Panc1 (cell line): ENCODE measurements at regions of chr1 and their contacts with region 1.

Region 1: GRCh38 chr1:9026271-9026670 is at the start of gene SLC2A7:
- DNase-seq: no peak
- ATAC-seq: no peak
- H3K4me3 ChIP-seq: no peak within 1 kb of the TSS
- H3K27ac ChIP-seq: no peak within 1 kb of the TSS
- H3K4me1 ChIP-seq: no peaks in the 10 kb centered on the region
- H3K27me3 ChIP-seq: no peaks in the 10 kb centered on the region
- CTCF ChIP-seq: no peak
- total RNA-seq, gene SLC2A7: not detected

Region 2: GRCh38 chr1:8925406-8925805 is 100.9 kb before region 1 on chr1:
- CTCF ChIA-PET with region 1: interaction called, 11 read pairs
- POLR2A ChIA-PET with region 1: no interaction called
- in situ Hi-C with region 1: no loop called
- intact Hi-C with region 1: no loop called
- DNase-seq: no peak
- ATAC-seq: no peak
- H3K4me3 ChIP-seq: no peak overlapping the region
- H3K27ac ChIP-seq: no peak overlapping the region
- H3K4me1 ChIP-seq: no peaks in the 10 kb centered on the region
- H3K27me3 ChIP-seq: no peaks in the 10 kb centered on the region
- CTCF ChIP-seq: no peak

Region 3: GRCh38 chr1:9045861-9046510 is 19.7 kb after region 1 on chr1:
- CTCF ChIA-PET with region 1: no interaction called
- POLR2A ChIA-PET with region 1: interaction called, 18 read pairs
- in situ Hi-C with region 1: no loop called
- intact Hi-C with region 1: no loop called
- DNase-seq: no peak
- ATAC-seq: no peak
- H3K4me3 ChIP-seq: no peak overlapping the region
- H3K27ac ChIP-seq: no peak overlapping the region
- H3K4me1 ChIP-seq: no peaks in the 10 kb centered on the region
- H3K27me3 ChIP-seq: no peaks in the 10 kb centered on the region
- CTCF ChIP-seq: no peak

Region 4: GRCh38 chr1:9121496-9122409 is 95.5 kb after region 1 on chr1:
- CTCF ChIA-PET with region 1: no interaction called
- POLR2A ChIA-PET with region 1: no interaction called
- in situ Hi-C with region 1: no loop called
- intact Hi-C with region 1: no loop called
- DNase-seq: no peak
- ATAC-seq: no peak
- H3K4me3 ChIP-seq: no peak overlapping the region
- H3K27ac ChIP-seq: no peak overlapping the region
- H3K4me1 ChIP-seq: peaks cover 12% of the 10 kb centered on the region
- H3K27me3 ChIP-seq: no peaks in the 10 kb centered on the region
- CTCF ChIP-seq: no peak